ENCODE measurements at regions of chr7 and their contacts with region 1.

Region 1: DNA sequence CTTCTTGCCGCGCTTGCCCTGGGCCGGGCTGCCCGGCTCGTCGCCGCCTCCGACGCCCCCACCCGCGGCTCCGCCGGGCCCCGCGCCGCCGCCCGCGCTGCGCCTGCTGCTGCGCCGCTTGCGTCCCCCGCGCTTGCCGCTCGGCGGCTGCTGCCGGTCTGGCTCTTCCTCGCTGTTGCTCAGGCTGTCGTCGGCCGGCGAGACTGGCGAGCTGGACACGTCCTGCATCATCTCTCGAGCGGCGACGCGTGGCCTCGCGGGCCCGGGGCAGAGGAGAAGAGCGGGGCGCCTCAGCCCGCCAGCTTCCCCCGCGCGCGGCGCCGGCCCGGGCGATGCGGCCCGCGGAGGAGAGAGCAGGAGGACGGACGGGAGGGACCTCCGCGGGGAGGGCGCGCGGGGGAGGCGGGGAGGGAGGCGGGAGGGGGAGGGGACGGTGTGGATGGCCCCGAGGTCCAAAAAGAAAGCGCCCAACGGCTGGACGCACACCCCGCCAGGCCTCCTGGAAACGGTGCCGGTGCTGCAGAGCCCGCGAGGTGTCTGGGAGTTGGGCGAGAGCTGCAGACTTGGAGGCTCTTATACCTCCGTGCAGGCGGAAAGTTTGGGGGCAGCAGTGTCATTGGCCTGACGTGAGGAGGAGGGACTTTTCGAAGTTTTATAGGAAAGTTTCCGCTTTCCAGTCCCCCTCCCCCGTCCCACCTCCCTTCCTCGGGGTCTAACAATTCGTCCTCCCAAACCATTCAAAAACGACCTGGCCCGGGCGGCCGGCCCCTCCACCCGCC is at the start of gene TWIST1:
- DNase-seq: peak; percentile 77 to 80
- H3K4me3 ChIP-seq: peak within 1 kb of the TSS; percentile 44 to 69 (median 62)
- H3K27ac ChIP-seq: no peak within 1 kb of the TSS
- H3K4me1 ChIP-seq: peaks cover 10 to 23% (median 17%) of the 10 kb centered on the region in 4 experiments
- H3K27me3 ChIP-seq: peaks cover 60 to 94% (median 84%) of the 10 kb centered on the region in 4 experiments
- CTCF ChIP-seq: no peak
- EP300 ChIP-seq: no peak
- POLR2A ChIP-seq: 0 out of 3 replicates have a peak, but pooled peaks of 1 of the 2 experiments have one; percentile 29
- RAD21 ChIP-seq: no peak
- total RNA-seq, gene TWIST1: 0.31 and 0.52 TPM in 2 replicates

Region 2: DNA sequence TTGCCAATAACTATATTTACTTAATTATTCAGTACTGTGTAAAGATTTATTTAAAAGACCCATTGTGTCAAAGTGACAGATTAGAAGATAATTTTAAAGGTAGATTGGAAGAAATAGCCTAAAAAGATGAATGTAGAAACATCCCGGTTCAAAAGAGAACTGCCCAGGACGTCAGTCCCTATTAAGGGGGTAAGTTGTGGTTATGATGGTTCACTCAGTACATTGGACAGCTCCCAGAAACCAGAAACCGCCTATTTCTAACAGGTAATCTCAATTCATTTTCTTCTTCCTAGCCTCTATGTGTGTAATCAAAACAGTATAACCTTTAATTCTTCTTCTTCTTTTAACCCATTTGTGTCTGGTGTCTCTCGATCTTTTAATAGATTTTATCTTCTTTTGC is 29.4 kb after region 1 on chr7:
- CTCF ChIA-PET with region 1: interaction called, 25 read pairs
- POLR2A ChIA-PET with region 1: interaction called, 7 read pairs
- DNase-seq: no peak
- H3K4me3 ChIP-seq: peak overlapping the region in 1 of 4 experiments; percentile 72; a peak in 2 of 8 replicates
- H3K27ac ChIP-seq: no peak overlapping the region
- H3K4me1 ChIP-seq: peaks cover 0 to 17% (median 9%) of the 10 kb centered on the region in 4 experiments; a peak in 5 of 7 replicates
- H3K27me3 ChIP-seq: peaks cover 25 to 44% (median 38%) of the 10 kb centered on the region in 4 experiments
- CTCF ChIP-seq: no peak
- EP300 ChIP-seq: no peak
- POLR2A ChIP-seq: no peak
- RAD21 ChIP-seq: no peak

Region 3: GRCh38 chr7:19442016-19442785 is 324.9 kb after region 1 on chr7:
- CTCF ChIA-PET with region 1: interaction called, 72 read pairs
- POLR2A ChIA-PET with region 1: no interaction called
- DNase-seq: peak in 1 of 2 experiments; percentile 23
- H3K4me3 ChIP-seq: no peak overlapping the region
- H3K27ac ChIP-seq: no peak overlapping the region
- H3K4me1 ChIP-seq: no peaks in the 10 kb centered on the region
- H3K27me3 ChIP-seq: no peaks in the 10 kb centered on the region
- CTCF ChIP-seq: peak in 2 of 3 experiments; percentile 69 to 70; a peak in 2 of 4 replicates
- EP300 ChIP-seq: no peak
- POLR2A ChIP-seq: no peak
- RAD21 ChIP-seq: peak; percentile 88 to 95